Transverse colon (tissue), 4 donors: ENCODE measurements at regions of chr7 and their contacts with region 1.

Region 1: DNA sequence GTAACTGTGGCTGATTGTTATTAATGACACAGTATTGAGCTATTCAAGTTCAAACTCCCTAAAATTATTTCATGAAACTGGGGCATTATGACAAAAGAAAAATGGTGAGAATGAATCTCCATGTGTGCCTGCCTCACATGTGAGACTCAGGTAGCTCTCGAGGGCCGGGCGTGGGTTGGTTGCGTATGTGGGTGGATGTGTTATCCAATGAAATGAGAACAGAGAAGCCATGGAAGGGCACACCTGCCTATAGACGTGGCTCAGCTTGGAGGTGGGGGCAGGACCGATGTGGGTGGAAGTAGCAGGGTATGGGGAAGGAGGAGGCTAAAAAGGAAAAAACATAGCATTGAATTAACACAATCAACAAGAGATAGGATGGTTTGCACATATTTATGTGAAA is 96.5 kb downstream of the AOAH start:
- DNase-seq: no peak
- H3K4me3 ChIP-seq: no peak overlapping the region
- H3K27ac ChIP-seq: no peak overlapping the region
- H3K4me1 ChIP-seq: peaks cover 0 to 7% (median 0%) of the 10 kb centered on the region in 4 donors
- H3K27me3 ChIP-seq: no peaks in the 10 kb centered on the region
- CTCF ChIP-seq: no peak
- EP300 ChIP-seq: no peak
- POLR2A ChIP-seq: no peak

Region 2: DNA sequence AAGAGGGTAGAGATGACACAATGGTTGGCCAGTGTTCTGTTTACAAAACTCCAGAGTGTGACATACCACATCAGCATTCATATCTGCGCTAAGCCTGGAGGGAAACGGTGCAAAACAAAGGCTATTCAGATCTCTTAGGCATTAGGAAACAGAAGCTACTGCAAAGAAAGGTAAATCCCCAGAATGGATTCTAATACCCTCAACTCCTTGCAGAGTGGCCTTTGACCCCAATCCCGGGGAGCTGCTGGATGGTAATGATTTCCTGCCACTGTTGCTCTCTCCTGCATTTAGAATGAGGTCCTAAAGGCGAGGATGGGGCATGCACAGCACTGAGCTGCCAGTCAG is 31.3 kb after region 1 on chr7:
- in situ Hi-C with region 1: no loop called
- intact Hi-C with region 1: loop called (anchors 1 kb)
- DNase-seq: no peak
- H3K4me3 ChIP-seq: peak overlapping the region in 1 of 4 donors; percentile 43
- H3K27ac ChIP-seq: peak overlapping the region; percentile 38 to 84 (median 60)
- H3K4me1 ChIP-seq: peaks cover 4 to 47% (median 31%) of the 10 kb centered on the region in 4 donors
- H3K27me3 ChIP-seq: no peaks in the 10 kb centered on the region
- CTCF ChIP-seq: no peak
- EP300 ChIP-seq: no peak
- POLR2A ChIP-seq: no peak